ENCODE measurements at regions of chr19 and their contacts with region 1.

Region 1: GRCh38 chr19:12052497-12053169 is at the start of gene ZNF878:
- DNase-seq: peak; percentile 99
- H3K4me3 ChIP-seq: peak within 1 kb of the TSS; percentile 22 to 60 (median 45)
- H3K27ac ChIP-seq: peak within 1 kb of the TSS; percentile 49 to 73 (median 54)
- H3K4me1 ChIP-seq: peaks cover 6 to 8% of the 10 kb centered on the region in 2 donors
- H3K27me3 ChIP-seq: no peaks in the 10 kb centered on the region
- CTCF ChIP-seq: peak in 2 of 6 experiments; percentile 27 to 33
- POLR2A ChIP-seq: peak in 1 of 2 donors; percentile 100
- total RNA-seq, gene ZNF878: 0.22 to 0.67 (median 0.33) TPM

Region 2: DNA sequence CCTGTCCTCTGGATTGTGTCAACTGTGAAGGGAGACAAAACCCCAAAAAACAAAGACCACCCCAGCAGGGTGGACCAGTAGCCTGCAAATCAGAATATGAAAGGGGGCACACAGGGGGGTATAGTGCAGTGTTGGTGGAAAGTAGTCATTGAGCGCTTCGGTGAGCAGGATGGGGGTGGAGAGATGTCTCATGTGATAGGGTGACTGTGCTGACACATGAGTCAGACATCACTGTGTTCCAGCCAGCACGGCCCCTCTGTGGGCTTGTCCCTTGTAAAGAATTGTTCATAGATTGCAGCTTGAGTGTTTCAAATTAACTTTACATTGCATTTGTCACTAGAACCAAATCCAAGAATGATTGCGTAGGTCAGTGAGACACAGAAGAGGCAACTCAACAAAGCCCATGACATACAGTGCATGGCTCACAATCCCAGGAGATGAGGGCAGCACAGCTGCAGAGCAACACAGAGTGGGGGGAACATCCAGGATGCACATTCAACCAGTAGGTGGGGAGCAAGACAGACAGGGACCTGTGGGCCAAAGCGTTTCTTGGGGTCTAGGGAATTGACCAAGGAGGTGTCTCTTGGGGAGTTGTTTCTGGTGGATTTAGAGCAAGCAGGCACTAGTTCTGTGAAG is 231.0 kb before region 1 on chr19:
- intact Hi-C with region 1: no loop called
- DNase-seq: no peak
- H3K4me3 ChIP-seq: no peak overlapping the region
- H3K27ac ChIP-seq: no peak overlapping the region
- H3K4me1 ChIP-seq: no peaks in the 10 kb centered on the region
- H3K27me3 ChIP-seq: no peaks in the 10 kb centered on the region
- CTCF ChIP-seq: no peak
- POLR2A ChIP-seq: no peak

Region 3: DNA sequence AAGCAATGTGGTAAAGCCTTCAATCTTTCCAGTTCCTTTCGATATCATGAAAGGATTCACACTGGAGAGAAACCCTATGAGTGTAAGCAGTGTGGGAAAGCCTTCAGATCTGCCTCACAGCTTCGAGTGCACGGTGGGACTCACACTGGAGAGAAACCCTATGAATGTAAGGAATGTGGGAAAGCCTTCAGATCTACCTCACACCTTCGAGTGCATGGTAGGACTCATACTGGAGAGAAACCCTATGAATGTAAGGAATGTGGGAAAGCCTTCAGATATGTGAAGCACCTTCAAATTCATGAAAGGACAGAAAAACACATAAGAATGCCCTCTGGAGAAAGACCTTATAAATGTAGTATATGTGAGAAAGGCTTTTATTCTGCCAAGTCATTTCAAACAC is 103.4 kb before region 1 on chr19:
- intact Hi-C with region 1: no loop called
- DNase-seq: no peak
- H3K4me3 ChIP-seq: no peak overlapping the region
- H3K27ac ChIP-seq: no peak overlapping the region
- H3K4me1 ChIP-seq: no peaks in the 10 kb centered on the region
- H3K27me3 ChIP-seq: no peaks in the 10 kb centered on the region
- CTCF ChIP-seq: no peak
- POLR2A ChIP-seq: no peak

Region 4: DNA sequence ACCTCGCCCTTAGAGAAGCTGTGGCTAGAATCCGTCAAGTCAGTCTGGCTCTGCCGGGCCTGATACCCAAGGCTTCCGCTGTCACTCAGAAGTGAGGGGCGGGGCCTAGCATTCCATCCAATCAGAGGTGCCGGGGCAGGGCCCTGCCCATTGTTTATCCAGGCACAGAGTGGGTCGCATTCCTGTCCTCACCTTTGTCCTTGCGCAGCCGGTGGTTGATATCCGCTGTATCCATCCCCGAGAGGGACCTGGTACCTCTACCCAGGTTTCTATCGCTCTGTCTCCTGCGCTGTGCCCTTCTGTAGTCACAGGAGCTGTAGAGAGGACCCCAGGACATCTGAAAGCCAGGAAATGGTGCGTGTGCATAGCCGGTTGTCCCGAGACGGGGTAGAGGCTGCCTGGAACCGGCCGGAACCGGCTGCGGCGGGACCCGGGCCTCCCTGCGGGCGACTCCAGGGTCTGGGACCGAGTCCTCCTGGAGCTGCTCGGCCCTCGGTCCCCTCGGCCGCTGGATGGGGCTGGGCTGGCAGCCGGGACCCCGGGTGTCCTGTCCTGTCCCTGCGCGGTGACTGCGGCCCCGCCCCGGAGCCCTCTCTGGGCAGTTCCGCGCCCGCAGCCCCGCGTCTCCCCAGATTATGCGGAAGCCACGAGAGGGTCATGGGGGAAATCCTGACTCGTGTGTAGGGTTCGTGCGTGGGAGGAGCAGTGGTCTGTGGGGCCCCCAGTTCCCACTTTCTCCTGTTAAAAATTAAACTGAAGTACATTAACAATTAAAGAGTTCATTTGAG is 87.6 kb before region 1 on chr19 and contains the start of gene ZNF763:
- intact Hi-C with region 1: loop called (anchors 10 kb)
- DNase-seq: peak; percentile 98 to 99
- H3K4me3 ChIP-seq: peak within 1 kb of the TSS; percentile 45 to 70 (median 65)
- H3K27ac ChIP-seq: peak within 1 kb of the TSS; percentile 74 to 99 (median 93)
- H3K4me1 ChIP-seq: peaks cover 6 to 24% of the 10 kb centered on the region in 2 donors
- H3K27me3 ChIP-seq: no peaks in the 10 kb centered on the region
- CTCF ChIP-seq: no peak
- POLR2A ChIP-seq: peak in 1 of 2 donors; percentile 87
- total RNA-seq, gene ZNF763: 7.4 to 14.4 (median 10.3) TPM